MCF 10A (cell line): ENCODE measurements at regions of chr12 and their contacts with region 1.

Region 1: DNA sequence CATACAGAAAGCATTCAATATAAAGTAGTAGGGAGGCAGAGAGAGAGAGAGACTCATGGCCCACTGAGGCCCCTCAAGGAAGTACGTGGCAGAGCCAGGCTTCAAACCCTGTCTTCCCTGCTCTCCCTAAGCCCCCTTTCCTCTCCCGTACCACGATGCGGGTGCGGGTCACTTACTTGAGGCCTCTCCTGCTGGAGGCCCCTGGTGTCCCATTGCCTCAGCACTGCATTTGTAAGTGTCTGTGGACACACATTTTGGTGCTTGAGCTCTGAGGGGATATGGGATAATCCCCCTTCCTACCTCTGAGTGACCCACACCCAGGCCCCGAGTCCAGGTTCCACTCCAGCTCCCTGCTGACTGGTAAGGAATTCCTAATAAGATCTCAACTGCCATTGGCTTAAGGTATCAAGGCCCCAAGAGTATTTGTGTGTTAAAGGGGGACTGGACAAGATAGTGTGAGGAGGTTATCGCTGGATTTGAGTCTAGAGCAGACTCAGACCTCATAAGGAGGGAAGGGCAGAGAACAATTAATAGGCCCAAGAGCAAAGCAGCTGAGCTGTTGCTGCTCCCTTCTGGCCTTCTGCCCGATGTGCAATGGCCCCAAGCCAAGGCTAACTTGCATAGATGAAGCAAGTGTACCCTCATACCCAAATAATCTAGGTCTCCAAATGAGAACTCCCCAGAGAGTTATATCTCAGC is 71.9 kb downstream of the CRACR2A start:
- DNase-seq: peak; percentile 30
- H3K4me3 Mint-ChIP-seq: no peak overlapping the region
- H3K27ac Mint-ChIP-seq: no peak overlapping the region
- H3K4me1 Mint-ChIP-seq: peaks cover 6% of the 10 kb centered on the region
- H3K27me3 Mint-ChIP-seq: no peaks in the 10 kb centered on the region
- CTCF ChIP-seq: no peak

Region 2: DNA sequence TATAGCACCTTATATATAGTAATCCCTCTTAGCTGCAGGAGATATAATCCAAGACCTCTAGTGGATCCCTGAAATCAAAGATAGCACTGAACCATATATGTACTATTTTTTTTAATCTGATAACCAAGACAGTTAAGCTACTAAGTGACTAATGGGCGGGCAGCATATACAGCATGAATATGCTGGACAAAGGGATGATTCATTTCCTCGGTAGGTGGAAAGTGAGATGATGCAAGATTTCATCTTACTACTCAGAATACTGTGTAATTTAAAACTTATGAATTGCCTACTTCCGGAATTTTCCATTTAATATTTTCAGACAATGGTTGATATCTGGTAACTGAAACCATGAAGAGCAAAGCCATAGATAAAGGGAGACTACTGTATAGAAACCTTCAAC is 153.9 kb before region 1 on chr12:
- CTCF ChIA-PET with region 1: no interaction called
- POLR2A ChIA-PET with region 1: no interaction called
- intact Hi-C with region 1: loop called (anchors 10 kb)
- DNase-seq: peak; percentile 83
- H3K4me3 Mint-ChIP-seq: no peak overlapping the region
- H3K27ac Mint-ChIP-seq: peak overlapping the region; percentile 46
- H3K4me1 Mint-ChIP-seq: no peaks in the 10 kb centered on the region
- H3K27me3 Mint-ChIP-seq: no peaks in the 10 kb centered on the region
- CTCF ChIP-seq: no peak

Region 3: DNA sequence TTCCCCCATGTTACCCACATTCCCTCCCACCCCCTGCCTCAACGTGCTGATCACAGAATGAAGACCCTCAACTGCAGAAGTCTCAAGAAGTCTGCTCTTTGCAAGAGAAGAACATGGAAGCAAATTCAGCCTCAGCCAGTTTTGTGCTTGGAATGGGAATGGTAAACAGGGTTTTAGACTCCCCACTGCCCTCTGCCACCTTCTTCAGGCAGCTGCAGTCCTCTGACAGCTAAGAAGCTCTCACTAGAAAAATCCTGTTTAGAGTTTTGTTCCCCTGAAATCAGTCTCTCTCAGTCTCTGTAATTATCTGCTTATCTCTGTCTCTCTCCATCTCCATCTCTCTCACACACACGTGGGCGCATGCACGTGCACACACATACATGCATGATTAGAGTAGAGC is 13.6 kb before region 1 on chr12:
- CTCF ChIA-PET with region 1: interaction called, 12 read pairs
- POLR2A ChIA-PET with region 1: interaction called, 3 read pairs
- intact Hi-C with region 1: no loop called
- DNase-seq: no peak
- H3K4me3 Mint-ChIP-seq: no peak overlapping the region
- H3K27ac Mint-ChIP-seq: no peak overlapping the region
- H3K4me1 Mint-ChIP-seq: peaks cover 6% of the 10 kb centered on the region
- H3K27me3 Mint-ChIP-seq: no peaks in the 10 kb centered on the region
- CTCF ChIP-seq: no peak

Region 4: DNA sequence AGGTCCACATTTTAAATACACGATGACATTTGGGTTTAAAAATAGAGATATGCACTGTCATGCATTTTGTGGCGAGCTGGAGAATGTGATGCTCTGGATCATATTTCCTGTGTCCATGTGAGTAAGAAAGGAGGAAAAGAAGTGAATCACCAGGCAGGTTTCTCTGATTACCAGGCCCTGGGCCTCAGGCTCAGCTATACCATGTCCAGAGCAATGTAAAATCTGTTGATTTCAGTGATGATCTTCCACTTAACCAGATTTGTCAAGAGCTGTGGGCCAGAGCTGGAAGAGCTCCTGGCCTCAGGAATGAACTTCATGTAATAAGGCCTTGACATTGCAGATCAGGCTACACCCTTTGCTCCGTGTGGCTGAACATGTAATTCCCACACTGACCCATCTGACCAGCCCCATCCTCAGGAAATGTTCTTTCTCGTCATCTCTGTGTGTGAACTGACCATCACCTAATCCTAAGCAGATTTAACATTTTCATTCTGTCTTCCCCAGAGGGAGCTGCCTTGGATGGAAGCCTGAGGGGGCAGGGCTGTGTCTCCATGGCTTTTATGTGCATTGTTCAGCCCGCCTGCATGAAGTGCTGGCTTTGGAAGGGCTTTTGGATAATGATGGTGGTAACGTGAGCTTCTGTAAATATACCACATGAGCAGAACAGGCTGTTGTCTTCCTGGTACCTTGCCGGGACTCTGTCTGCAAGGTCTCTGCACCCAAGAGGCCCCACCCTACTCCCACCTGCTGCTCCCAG is 17.4 kb after region 1 on chr12:
- CTCF ChIA-PET with region 1: interaction called, 10 read pairs
- POLR2A ChIA-PET with region 1: interaction called, 3 read pairs
- intact Hi-C with region 1: no loop called
- DNase-seq: peak; percentile 58
- H3K4me3 Mint-ChIP-seq: no peak overlapping the region
- H3K27ac Mint-ChIP-seq: peak overlapping the region; percentile 23
- H3K4me1 Mint-ChIP-seq: peaks cover 15% of the 10 kb centered on the region
- H3K27me3 Mint-ChIP-seq: peaks cover 13% of the 10 kb centered on the region
- CTCF ChIP-seq: no peak

Region 5: GRCh38 chr12:3732902-3733301 is 51.9 kb after region 1 on chr12:
- CTCF ChIA-PET with region 1: no interaction called
- POLR2A ChIA-PET with region 1: no interaction called
- intact Hi-C with region 1: no loop called
- DNase-seq: peak; percentile 6
- H3K4me3 Mint-ChIP-seq: no peak overlapping the region
- H3K27ac Mint-ChIP-seq: no peak overlapping the region
- H3K4me1 Mint-ChIP-seq: no peaks in the 10 kb centered on the region
- H3K27me3 Mint-ChIP-seq: peaks cover 8% of the 10 kb centered on the region
- CTCF ChIP-seq: no peak